K562 (cell line): ENCODE measurements at regions of chr19 and their contacts with region 1.

Region 1: DNA sequence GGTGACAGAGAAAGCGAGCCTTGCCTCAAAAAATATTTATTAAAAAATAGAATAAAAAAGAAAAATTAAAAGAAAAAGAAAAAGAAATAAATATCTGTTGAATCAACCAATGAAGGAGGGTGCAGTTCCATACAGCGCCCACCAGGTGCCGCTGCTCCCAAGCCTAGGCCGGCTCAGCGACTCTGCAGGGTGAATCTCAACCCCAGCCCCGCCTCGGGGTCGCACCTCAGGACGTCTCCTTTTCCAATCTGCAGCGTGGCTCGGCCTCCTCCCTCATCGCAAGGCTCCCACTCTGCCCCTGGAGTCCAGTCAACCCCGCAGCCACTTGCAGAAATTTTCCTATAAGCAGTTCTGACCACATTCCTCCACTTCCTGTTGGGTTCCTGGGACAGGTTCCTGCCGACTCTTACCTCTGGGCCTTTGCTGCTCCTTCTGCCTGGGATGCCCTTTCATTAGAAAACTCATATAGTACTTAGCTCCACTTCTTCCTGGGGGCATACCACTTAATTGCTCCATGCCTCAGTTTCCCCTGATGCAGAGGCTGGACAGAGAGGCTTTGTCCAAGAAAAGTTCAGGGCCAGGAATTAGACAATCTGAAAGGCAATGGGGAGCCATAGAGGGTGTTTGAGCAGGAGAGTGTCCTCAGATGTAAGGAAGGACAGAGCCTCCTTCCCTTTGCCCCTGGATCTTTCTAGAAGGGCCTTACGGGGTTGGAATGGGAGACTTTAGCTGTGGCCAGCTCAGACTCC is 24.3 kb downstream of the NFILZ start:
- DNase-seq: peak; percentile 70 to 82 (median 81)
- ATAC-seq: peak; percentile 87
- H3K4me3 ChIP-seq: no peak overlapping the region
- H3K27ac ChIP-seq: no peak overlapping the region
- H3K4me1 ChIP-seq: peaks cover 0 to 6% of the 10 kb centered on the region in 2 experiments; a peak in 3 of 5 replicates
- H3K27me3 ChIP-seq: peaks cover 0 to 21% of the 10 kb centered on the region in 2 experiments; a peak in 2 of 5 replicates
- CTCF ChIP-seq: peak; percentile 90 to 96 (median 90)
- EP300 ChIP-seq: no peak
- POLR2A ChIP-seq: no peak
- RAD21 ChIP-seq: peak; percentile 96 to 97

Region 2: GRCh38 chr19:8618751-8619150 is 36.0 kb before region 1 on chr19:
- CTCF ChIA-PET with region 1: no interaction called
- POLR2A ChIA-PET with region 1: no interaction called
- in situ Hi-C with region 1: no loop called
- intact Hi-C with region 1: no loop called
- DNase-seq: no peak
- ATAC-seq: peak; percentile 60; the same call in 2 of the 3 replicates
- H3K4me3 ChIP-seq: no peak overlapping the region
- H3K27ac ChIP-seq: no peak overlapping the region
- H3K4me1 ChIP-seq: no peaks in the 10 kb centered on the region; a peak in 1 of 5 replicates
- H3K27me3 ChIP-seq: peaks cover 11 to 24% of the 10 kb centered on the region in 2 experiments; a peak in 3 of 5 replicates
- CTCF ChIP-seq: no peak
- EP300 ChIP-seq: no peak
- POLR2A ChIP-seq: no peak
- RAD21 ChIP-seq: no peak

Region 3: DNA sequence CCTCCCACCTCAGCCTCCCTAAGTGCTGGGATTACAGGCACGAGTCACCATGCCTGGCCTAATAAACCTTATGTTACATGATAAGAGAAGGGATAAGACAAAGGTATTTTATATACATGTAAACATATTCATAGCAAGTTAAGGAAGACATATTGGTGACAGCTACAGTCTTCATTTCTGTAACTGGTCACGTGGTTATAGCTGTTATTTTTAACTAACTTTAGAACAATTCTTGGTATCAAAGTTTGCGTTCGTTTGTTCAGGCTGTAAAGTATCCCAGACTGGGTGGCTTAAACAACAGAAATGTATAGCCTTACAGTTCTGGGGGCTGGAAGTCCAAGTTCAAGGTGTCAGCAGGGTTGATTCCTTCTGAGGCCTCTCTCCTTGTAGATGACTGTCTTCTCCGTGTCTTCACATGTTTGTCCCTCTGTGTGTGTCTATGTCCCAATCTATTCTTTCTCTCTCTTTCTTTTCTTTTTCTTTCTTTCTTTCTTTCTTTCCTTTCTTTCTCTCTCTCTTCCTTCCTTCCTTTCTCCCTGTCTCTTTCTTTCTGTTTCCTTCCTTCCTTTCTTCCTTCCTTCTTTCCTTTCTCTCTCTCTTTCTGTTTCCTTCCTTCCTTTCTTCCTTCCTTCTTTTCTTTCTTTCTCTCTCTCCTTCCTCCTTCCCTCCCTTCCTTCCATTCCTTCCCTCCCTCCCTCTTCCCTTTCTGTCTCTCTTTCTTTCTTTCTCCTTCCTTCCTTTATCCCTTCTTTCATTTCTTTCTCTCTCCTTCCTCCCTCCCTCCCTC is 36.2 kb after region 1 on chr19:
- CTCF ChIA-PET with region 1: interaction called, 50 read pairs
- POLR2A ChIA-PET with region 1: no interaction called
- in situ Hi-C with region 1: loop called (anchors 5 kb)
- intact Hi-C with region 1: loop called (anchors 1 kb)
- DNase-seq: no peak
- ATAC-seq: no peak
- H3K4me3 ChIP-seq: no peak overlapping the region
- H3K27ac ChIP-seq: no peak overlapping the region
- H3K4me1 ChIP-seq: no peaks in the 10 kb centered on the region; a peak in 2 of 5 replicates
- H3K27me3 ChIP-seq: no peaks in the 10 kb centered on the region
- CTCF ChIP-seq: no peak
- EP300 ChIP-seq: no peak
- POLR2A ChIP-seq: no peak
- RAD21 ChIP-seq: no peak

Region 4: GRCh38 chr19:8832132-8833021 is 177.6 kb after region 1 on chr19 and contains the starts of genes MBD3L1 and ZNF558:
- CTCF ChIA-PET with region 1: no interaction called
- POLR2A ChIA-PET with region 1: no interaction called
- in situ Hi-C with region 1: no loop called
- intact Hi-C with region 1: no loop called
- DNase-seq: peak; percentile 98 to 99 (median 99)
- ATAC-seq: peak; percentile 96
- H3K4me3 ChIP-seq: peak within 1 kb of the TSS; percentile 66
- H3K27ac ChIP-seq: peak within 1 kb of the TSS; percentile 97
- H3K4me1 ChIP-seq: peaks cover 10% of the 10 kb centered on the region in 2 experiments; a peak in 3 of 5 replicates
- H3K27me3 ChIP-seq: no peaks in the 10 kb centered on the region
- CTCF ChIP-seq: peak in 2 of 3 experiments; percentile 41 to 44; a peak in 3 of 6 replicates
- EP300 ChIP-seq: 0 out of 2 replicates have a peak, but pooled peaks have one; percentile 2
- POLR2A ChIP-seq: peak; percentile 94
- RAD21 ChIP-seq: no peak
- polyA plus RNA-seq, gene MBD3L1: not detected
- polyA plus RNA-seq, gene ZNF558: 5.4 to 5.5 TPM

Region 5: GRCh38 chr19:8988204-8988603 is 333.4 kb after region 1 on chr19:
- CTCF ChIA-PET with region 1: no interaction called
- POLR2A ChIA-PET with region 1: no interaction called
- in situ Hi-C with region 1: no loop called
- intact Hi-C with region 1: loop called (anchors 5 kb)
- DNase-seq: peak; percentile 29 to 57 (median 53)
- ATAC-seq: no peak
- H3K4me3 ChIP-seq: no peak overlapping the region
- H3K27ac ChIP-seq: no peak overlapping the region
- H3K4me1 ChIP-seq: no peaks in the 10 kb centered on the region
- H3K27me3 ChIP-seq: no peaks in the 10 kb centered on the region; a peak in 1 of 5 replicates
- CTCF ChIP-seq: peak; percentile 25 to 49 (median 39); a peak in 4 of 6 replicates
- EP300 ChIP-seq: no peak
- POLR2A ChIP-seq: no peak
- RAD21 ChIP-seq: peak; percentile 23 to 55; a peak in 3 of 4 replicates